MCF 10A (cell line): ENCODE measurements at regions of chr17 and their contacts with region 1.

Region 1: GRCh38 chr17:75205037-75205792 is at the start of gene NUP85:
- DNase-seq: peak; percentile 94
- H3K4me3 Mint-ChIP-seq: peak within 1 kb of the TSS; percentile 78
- H3K27ac Mint-ChIP-seq: peak within 1 kb of the TSS; percentile 98
- H3K4me1 Mint-ChIP-seq: peaks cover 11% of the 10 kb centered on the region
- H3K27me3 Mint-ChIP-seq: no peaks in the 10 kb centered on the region
- CTCF ChIP-seq: no peak
- total RNA-seq, gene NUP85: 42.3 and 49.2 TPM in 2 replicates

Region 2: DNA sequence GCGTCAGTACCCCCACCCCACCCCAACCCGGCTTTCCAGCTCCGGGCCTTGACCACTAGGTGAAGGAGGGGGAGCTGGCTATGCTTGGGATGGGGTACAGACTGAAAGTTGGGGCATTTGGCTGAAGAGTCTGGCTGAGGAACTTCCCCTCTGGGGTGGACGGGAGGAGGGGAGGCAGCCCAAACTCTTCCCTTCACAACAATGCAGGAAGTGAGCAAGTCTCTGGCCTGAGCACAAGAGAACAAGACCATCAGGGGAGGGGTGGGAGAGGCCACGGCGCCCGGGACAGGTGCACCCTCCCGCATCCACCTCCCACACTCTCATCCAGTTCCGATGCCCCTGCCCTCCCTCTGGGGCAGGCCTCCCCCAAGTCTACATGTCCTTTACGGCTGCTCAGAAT is 287.8 kb before region 1 on chr17:
- CTCF ChIA-PET with region 1: no interaction called
- POLR2A ChIA-PET with region 1: no interaction called
- intact Hi-C with region 1: no loop called
- DNase-seq: no peak
- H3K4me3 Mint-ChIP-seq: no peak overlapping the region
- H3K27ac Mint-ChIP-seq: no peak overlapping the region
- H3K4me1 Mint-ChIP-seq: no peaks in the 10 kb centered on the region
- H3K27me3 Mint-ChIP-seq: peaks cover 8% of the 10 kb centered on the region
- CTCF ChIP-seq: no peak

Region 3: GRCh38 chr17:75069783-75070182 is 135.4 kb before region 1 on chr17:
- CTCF ChIA-PET with region 1: interaction called, 11 read pairs
- POLR2A ChIA-PET with region 1: interaction called, 5 read pairs
- intact Hi-C with region 1: loop called (anchors 5 kb)
- DNase-seq: peak; percentile 61
- H3K4me3 Mint-ChIP-seq: no peak overlapping the region
- H3K27ac Mint-ChIP-seq: no peak overlapping the region
- H3K4me1 Mint-ChIP-seq: peaks cover 5% of the 10 kb centered on the region
- H3K27me3 Mint-ChIP-seq: no peaks in the 10 kb centered on the region
- CTCF ChIP-seq: peak; percentile 47

Region 4: GRCh38 chr17:75173526-75173925 is 31.7 kb before region 1 on chr17:
- CTCF ChIA-PET with region 1: interaction called, 36 read pairs
- POLR2A ChIA-PET with region 1: interaction called, 6 read pairs
- intact Hi-C with region 1: no loop called
- DNase-seq: no peak
- H3K4me3 Mint-ChIP-seq: no peak overlapping the region
- H3K27ac Mint-ChIP-seq: peak overlapping the region; percentile 75
- H3K4me1 Mint-ChIP-seq: no peaks in the 10 kb centered on the region
- H3K27me3 Mint-ChIP-seq: no peaks in the 10 kb centered on the region
- CTCF ChIP-seq: no peak

Region 5: GRCh38 chr17:75261336-75262111 is 56.3 kb after region 1 on chr17 and contains the starts of genes GGA3 and MRPS7:
- CTCF ChIA-PET with region 1: interaction called, 3 read pairs
- POLR2A ChIA-PET with region 1: interaction called, 16 read pairs
- intact Hi-C with region 1: no loop called
- DNase-seq: peak; percentile 94
- H3K4me3 Mint-ChIP-seq: peak within 1 kb of the TSS; percentile 100
- H3K27ac Mint-ChIP-seq: peak within 1 kb of the TSS; percentile 100
- H3K4me1 Mint-ChIP-seq: peaks cover 46% of the 10 kb centered on the region
- H3K27me3 Mint-ChIP-seq: no peaks in the 10 kb centered on the region
- CTCF ChIP-seq: no peak
- total RNA-seq, gene GGA3: 32.7 and 39.5 TPM in 2 replicates
- total RNA-seq, gene MRPS7: 73.9 and 75.0 TPM in 2 replicates